ENCODE measurements at regions of chr2 and their contacts with region 1.

Region 1: GRCh38 chr2:162243294-162243693 is at the start of gene FAP:
- DNase-seq: peak; percentile 91
- H3K4me3 ChIP-seq: peak within 1 kb of the TSS; percentile 51
- H3K27me3 ChIP-seq: no peaks in the 10 kb centered on the region
- CTCF ChIP-seq: no peak
- polyA plus RNA-seq, gene FAP: 135 and 263 TPM in 2 replicates

Region 2: DNA sequence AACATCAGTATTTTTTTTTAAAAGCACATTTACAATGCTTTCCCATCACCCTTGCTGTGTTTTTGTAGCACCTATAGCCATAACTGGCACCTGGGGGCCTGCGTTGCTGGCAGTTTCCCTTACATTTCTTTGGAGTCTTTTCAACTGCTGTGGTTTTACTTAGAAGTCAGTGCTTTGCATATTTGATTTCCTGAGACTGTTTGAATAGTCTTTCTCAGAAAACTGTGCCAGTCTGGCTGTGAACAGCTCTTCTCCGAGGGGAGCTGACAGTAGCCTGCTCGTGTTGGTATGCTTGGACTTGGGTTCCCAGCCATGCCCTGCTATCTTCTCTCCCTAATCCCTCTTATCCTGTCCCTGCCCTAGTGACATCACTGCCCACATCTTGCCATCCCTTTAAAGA is 250.8 kb before region 1 on chr2:
- CTCF ChIA-PET with region 1: no interaction called
- POLR2A ChIA-PET with region 1: no interaction called
- DNase-seq: no peak
- H3K4me3 ChIP-seq: no peak overlapping the region
- H3K27me3 ChIP-seq: no peaks in the 10 kb centered on the region
- CTCF ChIP-seq: no peak

Region 3: GRCh38 chr2:162221064-162221463 is 22.2 kb before region 1 on chr2:
- CTCF ChIA-PET with region 1: interaction called, 40 read pairs
- POLR2A ChIA-PET with region 1: interaction called, 4 read pairs
- DNase-seq: no peak
- H3K4me3 ChIP-seq: no peak overlapping the region
- H3K27me3 ChIP-seq: no peaks in the 10 kb centered on the region
- CTCF ChIP-seq: peak; percentile 90

Measured in BJ (cell line).